ENCODE measurements at regions of chr5 and their contacts with region 1.

Region 1: GRCh38 chr5:176700239-176700847 is 53.1 kb downstream of the TSPAN17 start:
- DNase-seq: peak; percentile 24 to 34
- ATAC-seq: peak in 1 of 2 experiments; percentile 77; a peak in 3 of 6 replicates
- H3K4me3 ChIP-seq: no peak overlapping the region
- H3K27ac ChIP-seq: no peak overlapping the region
- H3K4me1 ChIP-seq: no peaks in the 10 kb centered on the region
- CTCF ChIP-seq: peak; percentile 51
- EP300 ChIP-seq: no peak
- POLR2A ChIP-seq: no peak
- RAD21 ChIP-seq: peak; percentile 64 to 68

Region 2: DNA sequence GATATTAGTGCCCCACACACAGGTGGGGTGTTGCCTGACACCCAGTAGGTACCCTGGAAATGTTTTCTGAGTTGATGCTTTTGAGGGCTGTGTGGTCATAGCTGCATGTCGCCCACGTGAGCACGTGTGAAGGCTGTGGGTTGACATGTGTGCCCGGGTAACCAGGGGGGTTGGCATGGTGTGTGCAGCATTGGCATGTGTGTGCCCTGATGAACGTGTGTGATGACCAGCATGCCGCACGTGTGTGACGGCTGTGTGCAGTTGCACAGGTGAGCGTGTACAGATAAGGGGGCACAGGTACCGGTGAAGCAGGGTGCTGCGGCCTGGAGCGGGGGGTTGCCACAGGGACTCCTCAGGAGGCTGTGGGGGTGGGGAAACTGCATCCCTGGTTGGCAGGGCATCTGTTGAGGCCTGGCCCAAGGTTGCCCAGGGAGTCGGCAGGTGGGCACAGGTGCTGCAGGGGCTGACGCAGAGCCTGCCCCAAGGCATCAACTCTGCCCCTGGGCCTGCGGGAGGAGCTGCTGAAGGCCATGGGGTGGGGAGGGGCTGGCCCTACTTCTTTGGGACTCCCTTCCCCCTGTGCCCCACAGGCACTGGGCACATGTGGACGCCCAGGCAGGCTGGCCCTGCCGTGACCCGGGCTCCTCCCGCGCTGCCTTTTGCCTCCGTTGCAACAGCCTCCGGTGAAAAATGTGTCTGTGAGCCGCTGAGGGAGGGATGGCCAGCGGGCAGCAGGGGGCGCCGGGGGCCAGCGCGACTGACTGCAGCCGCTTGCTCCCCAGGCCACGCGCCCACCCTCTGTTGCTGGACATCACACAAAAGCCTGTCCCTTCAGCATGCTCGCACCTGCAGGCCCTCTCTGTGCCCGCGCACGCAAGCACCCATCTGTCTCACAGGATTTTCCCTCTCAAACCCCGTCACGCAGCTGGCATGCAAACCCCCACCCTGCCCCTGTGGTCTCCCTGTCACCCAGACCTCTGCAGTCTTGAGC is 112.2 kb after region 1 on chr5:
- CTCF ChIA-PET with region 1: interaction called, 17 read pairs
- POLR2A ChIA-PET with region 1: no interaction called
- DNase-seq: peak; percentile 49 to 80
- ATAC-seq: peak; percentile 42 to 79; a peak in 5 of 6 replicates
- H3K4me3 ChIP-seq: no peak overlapping the region
- H3K27ac ChIP-seq: no peak overlapping the region
- H3K4me1 ChIP-seq: peaks cover 20% of the 10 kb centered on the region; the same call in 2 of the 3 replicates
- CTCF ChIP-seq: peak; percentile 63
- EP300 ChIP-seq: no peak
- POLR2A ChIP-seq: no peak
- RAD21 ChIP-seq: peak; percentile 62 to 63